ENCODE measurements at regions of chr19 and their contacts with region 1.

Region 1: GRCh38 chr19:7340959-7341837 is 7.5 kb upstream of the ARHGEF18 start:
- DNase-seq: peak; percentile 43 to 57
- ATAC-seq: peak; percentile 39 to 58
- H3K4me3 ChIP-seq: no peak overlapping the region
- H3K27ac ChIP-seq: no peak overlapping the region
- H3K4me1 ChIP-seq: no peaks in the 10 kb centered on the region
- H3K27me3 ChIP-seq: no peaks in the 10 kb centered on the region
- CTCF ChIP-seq: peak; percentile 91 to 97 (median 95)
- POLR2A ChIP-seq: no peak

Region 2: GRCh38 chr19:7104747-7105447 is 236.3 kb before region 1 on chr19:
- in situ Hi-C with region 1: loop called (anchors 5 kb)
- intact Hi-C with region 1: no loop called
- DNase-seq: no peak
- ATAC-seq: no peak
- H3K4me3 ChIP-seq: no peak overlapping the region
- H3K27ac ChIP-seq: no peak overlapping the region
- H3K4me1 ChIP-seq: peaks cover 0 to 1% of the 10 kb centered on the region in 2 donors
- H3K27me3 ChIP-seq: no peaks in the 10 kb centered on the region
- CTCF ChIP-seq: no peak
- POLR2A ChIP-seq: no peak

Region 3: GRCh38 chr19:7257148-7258034 is 83.8 kb before region 1 on chr19:
- in situ Hi-C with region 1: no loop called
- intact Hi-C with region 1: no loop called
- DNase-seq: no peak
- ATAC-seq: no peak
- H3K4me3 ChIP-seq: no peak overlapping the region
- H3K27ac ChIP-seq: peak overlapping the region in 1 of 4 donors; percentile 31
- H3K4me1 ChIP-seq: peaks cover 27 to 46% of the 10 kb centered on the region in 2 donors
- H3K27me3 ChIP-seq: no peaks in the 10 kb centered on the region
- CTCF ChIP-seq: no peak
- POLR2A ChIP-seq: no peak

Region 4: GRCh38 chr19:7366701-7367420 is 25.7 kb after region 1 on chr19:
- in situ Hi-C with region 1: no loop called
- intact Hi-C with region 1: no loop called
- DNase-seq: no peak
- ATAC-seq: no peak
- H3K4me3 ChIP-seq: no peak overlapping the region
- H3K27ac ChIP-seq: no peak overlapping the region
- H3K4me1 ChIP-seq: no peaks in the 10 kb centered on the region
- H3K27me3 ChIP-seq: no peaks in the 10 kb centered on the region
- CTCF ChIP-seq: no peak
- POLR2A ChIP-seq: no peak

Measured in gastrocnemius medialis (tissue), 4 donors.